Upper lobe of right lung (tissue), 1 donor: ENCODE measurements at regions of chr11 and their contacts with region 1.

Region 1: GRCh38 chr11:76799066-76799804 is 16.1 kb downstream of the TSKU start:
- DNase-seq: peak; percentile 93
- ATAC-seq: peak; percentile 92
- H3K4me3 ChIP-seq: peak overlapping the region; percentile 36
- H3K27ac ChIP-seq: peak overlapping the region; percentile 47
- H3K4me1 ChIP-seq: peaks cover 32% of the 10 kb centered on the region
- H3K27me3 ChIP-seq: no peaks in the 10 kb centered on the region
- CTCF ChIP-seq: peak; percentile 95

Region 2: DNA sequence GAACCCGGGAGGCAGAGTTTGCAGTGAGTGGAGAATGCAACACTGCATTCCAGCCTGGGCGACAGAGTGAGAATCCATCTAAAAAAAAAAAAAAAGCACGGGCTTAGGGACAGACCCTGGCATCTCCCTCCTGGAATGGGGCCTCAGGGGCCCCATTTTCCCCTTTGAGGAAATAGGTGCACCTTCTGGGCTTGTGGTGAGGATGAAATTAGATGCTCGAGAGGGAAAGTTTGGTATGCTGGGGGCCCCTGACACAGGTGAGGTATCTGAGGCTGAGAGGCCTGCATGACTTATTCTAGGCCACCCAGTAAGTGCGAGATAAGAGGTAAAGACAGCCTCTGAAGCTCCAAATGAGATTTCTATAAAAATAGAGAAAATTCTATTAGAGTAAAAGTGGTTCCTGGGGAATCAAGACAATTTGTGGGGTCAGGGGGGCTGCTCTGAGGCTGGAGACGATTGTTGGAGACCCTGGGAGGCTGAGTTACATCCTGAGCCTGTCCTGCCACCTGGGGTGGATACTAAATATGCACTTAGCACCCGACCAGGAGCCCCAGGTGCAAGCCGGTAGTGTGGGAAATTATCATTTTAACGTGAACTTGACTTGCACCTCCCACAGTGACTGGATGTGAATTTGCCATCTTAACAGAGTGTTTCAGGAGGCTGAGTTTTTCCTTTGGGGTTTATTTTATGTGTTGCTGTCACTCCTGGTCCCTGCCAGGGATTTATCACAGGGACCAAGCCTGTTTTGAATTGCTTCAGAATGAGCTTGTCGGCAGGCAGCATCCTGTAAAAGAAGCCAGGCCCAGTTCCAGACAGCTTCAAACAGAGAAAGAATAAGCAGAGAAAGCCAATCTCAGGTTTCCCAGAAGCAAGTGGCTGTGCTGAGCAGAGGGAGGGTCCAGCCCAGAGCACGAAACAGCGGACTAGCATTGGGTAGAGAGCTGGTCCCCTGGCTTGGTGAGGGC is 64.5 kb before region 1 on chr11:
- intact Hi-C with region 1: loop called (anchors 5 kb)
- DNase-seq: no peak
- ATAC-seq: no peak
- H3K4me3 ChIP-seq: no peak overlapping the region
- H3K27ac ChIP-seq: no peak overlapping the region
- H3K4me1 ChIP-seq: peaks cover 9% of the 10 kb centered on the region
- H3K27me3 ChIP-seq: no peaks in the 10 kb centered on the region
- CTCF ChIP-seq: no peak